ENCODE measurements at regions of chr10 and their contacts with region 1.

Region 1: DNA sequence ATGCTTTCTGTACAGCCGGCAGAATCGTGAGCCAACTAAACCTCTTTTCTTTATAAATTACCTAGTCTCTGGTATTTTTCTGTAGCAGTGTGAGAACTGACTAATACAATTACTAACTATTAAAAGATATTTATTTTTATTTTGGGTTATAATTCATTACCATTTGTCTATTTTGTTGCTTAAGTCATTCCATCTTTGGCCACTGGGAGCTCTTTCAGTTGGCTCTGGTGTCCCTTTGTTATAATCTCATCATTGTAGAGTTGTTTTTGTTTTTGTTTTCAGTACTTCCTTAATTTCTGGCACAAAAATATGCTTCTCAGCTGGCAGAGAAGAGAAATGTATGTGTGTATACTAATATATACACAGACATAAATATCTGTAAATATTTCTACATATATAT is 807.9 kb upstream of the MBL2 start:
- DNase-seq: no peak
- ATAC-seq: no peak
- H3K4me3 ChIP-seq: no peak overlapping the region
- H3K27ac ChIP-seq: no peak overlapping the region
- H3K4me1 ChIP-seq: peaks cover 11% of the 10 kb centered on the region
- H3K27me3 ChIP-seq: no peaks in the 10 kb centered on the region
- CTCF ChIP-seq: peak; percentile 55; the same call in 1 of the 2 replicates

Region 2: DNA sequence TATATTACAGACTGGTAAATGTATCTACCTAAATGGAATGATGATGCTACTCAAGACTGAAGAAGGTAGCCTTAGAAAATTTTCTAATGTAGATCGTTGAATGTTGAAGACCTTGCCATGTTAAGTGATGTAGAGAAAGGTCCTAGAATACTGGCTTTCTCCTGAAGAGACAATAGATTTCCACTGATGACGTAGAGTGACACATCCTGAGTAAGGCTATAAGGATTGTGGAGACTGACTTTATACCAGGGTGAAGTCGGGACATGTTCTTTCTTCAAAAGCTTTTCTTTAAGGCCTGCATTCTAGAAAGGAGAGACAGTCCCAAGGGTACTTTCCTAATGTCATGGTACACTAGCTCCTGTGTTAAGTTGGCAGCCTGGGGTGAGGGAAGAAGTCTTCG is 1162.0 kb after region 1 on chr10:
- CTCF ChIA-PET with region 1: no interaction called
- POLR2A ChIA-PET with region 1: interaction called, 10 read pairs
- intact Hi-C with region 1: no loop called
- DNase-seq: no peak
- ATAC-seq: no peak
- H3K4me3 ChIP-seq: no peak overlapping the region
- H3K27ac ChIP-seq: no peak overlapping the region
- H3K4me1 ChIP-seq: no peaks in the 10 kb centered on the region
- H3K27me3 ChIP-seq: no peaks in the 10 kb centered on the region
- CTCF ChIP-seq: no peak

Measured in PC-3 (cell line).